CD4-positive, alpha-beta memory T cell (primary cell): ENCODE measurements at regions of chr6 and their contacts with region 1.

Region 1: DNA sequence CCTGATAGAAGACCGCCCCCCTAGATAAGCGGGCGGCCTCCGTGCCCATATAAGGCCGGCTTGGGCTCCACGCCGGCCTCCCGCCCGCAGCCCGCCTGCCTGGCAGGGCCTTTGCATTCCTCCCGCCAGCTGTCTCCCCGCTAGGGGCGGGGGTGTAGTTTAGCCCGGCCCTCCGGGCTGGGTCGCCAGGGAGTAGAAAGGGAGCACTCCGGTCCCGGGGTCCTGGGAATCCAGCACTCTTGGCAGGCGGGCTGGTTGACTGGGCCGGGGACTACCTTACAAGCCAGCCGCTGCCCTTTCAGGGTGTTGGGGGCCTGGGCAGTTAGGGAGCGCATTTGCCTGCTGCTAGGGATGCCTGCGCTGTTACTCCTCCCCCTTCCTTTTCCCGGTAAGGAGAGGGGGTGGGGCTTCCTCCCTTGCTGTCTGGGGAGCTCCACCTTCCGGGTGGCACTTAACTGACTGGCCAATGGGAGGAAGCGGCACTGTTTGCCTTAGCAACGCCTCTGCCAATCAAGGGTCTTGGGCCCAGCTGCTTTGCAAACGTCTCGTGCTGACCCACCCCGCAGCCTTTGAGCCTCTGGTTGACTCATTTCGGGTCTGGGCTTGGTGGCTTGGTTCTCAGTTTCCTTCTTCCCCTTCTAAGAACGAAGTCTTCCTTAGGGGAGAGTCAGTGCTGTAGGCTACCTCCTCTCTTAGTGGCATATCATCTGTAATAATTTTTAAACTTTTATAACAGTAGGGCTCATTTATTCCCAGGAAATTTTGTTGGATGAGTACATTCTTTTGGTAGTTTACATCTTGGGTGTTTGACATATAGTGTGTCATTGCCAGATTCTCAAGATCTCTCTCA is 3.4 kb downstream of the SRF start:
- DNase-seq: peak; percentile 89 to 97 (median 91)
- H3K4me3 ChIP-seq: peak overlapping the region; percentile 22 to 49
- H3K4me3 Mint-ChIP-seq: peak overlapping the region; percentile 77 to 99 (median 93)
- H3K27ac ChIP-seq: peak overlapping the region; percentile 83
- H3K27ac Mint-ChIP-seq: peak overlapping the region; percentile 93 to 98 (median 97)
- H3K4me1 ChIP-seq: peaks cover 47% of the 10 kb centered on the region
- H3K4me1 Mint-ChIP-seq: peaks cover 29 to 56% (median 42%) of the 10 kb centered on the region in 4 donors
- H3K27me3 ChIP-seq: no peaks in the 10 kb centered on the region
- H3K27me3 Mint-ChIP-seq: no peaks in the 10 kb centered on the region

Region 2: DNA sequence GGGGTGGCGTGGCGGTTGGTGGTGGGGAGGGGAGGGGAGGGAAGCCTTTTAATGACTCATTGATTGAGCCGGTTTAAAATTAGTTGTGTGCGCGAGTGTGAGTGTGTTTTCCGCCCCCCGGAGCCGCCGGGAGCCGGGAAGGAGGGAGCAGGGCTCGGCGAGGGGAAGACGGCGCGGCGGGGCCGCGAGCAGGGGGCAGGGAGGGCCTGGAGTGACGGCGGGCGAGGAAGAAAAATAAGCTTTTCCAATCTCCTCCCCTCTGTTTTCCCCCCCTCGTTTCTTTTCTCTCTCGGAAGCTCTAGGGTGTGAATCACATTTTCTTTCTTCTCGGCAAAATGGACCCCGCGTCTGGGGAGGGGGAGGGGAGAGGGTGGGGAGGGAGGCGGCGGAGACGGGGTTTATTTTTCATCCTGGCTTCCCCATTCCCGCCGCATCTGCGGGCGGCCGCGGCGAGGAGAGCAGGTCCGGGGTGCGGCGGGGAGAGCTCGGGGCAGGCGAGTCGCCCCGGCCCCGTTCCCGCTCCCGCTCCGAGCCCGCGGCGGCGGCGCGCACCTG is 391.8 kb before region 1 on chr6:
- CTCF ChIA-PET with region 1: no interaction called
- POLR2A ChIA-PET with region 1: no interaction called
- intact Hi-C with region 1: loop called (anchors 5 kb)
- DNase-seq: peak; percentile 82 to 87 (median 82)
- H3K4me3 ChIP-seq: peak overlapping the region; percentile 80 to 88
- H3K4me3 Mint-ChIP-seq: peak overlapping the region; percentile 95 to 100 (median 99)
- H3K27ac ChIP-seq: peak overlapping the region; percentile 100
- H3K27ac Mint-ChIP-seq: peak overlapping the region in 6 of 7 donors; percentile 100
- H3K4me1 ChIP-seq: peaks cover 68% of the 10 kb centered on the region
- H3K4me1 Mint-ChIP-seq: peaks cover 20 to 46% (median 28%) of the 10 kb centered on the region in 4 donors
- H3K27me3 ChIP-seq: no peaks in the 10 kb centered on the region
- H3K27me3 Mint-ChIP-seq: peaks cover 0 to 1% of the 10 kb centered on the region in 2 donors

Region 3: DNA sequence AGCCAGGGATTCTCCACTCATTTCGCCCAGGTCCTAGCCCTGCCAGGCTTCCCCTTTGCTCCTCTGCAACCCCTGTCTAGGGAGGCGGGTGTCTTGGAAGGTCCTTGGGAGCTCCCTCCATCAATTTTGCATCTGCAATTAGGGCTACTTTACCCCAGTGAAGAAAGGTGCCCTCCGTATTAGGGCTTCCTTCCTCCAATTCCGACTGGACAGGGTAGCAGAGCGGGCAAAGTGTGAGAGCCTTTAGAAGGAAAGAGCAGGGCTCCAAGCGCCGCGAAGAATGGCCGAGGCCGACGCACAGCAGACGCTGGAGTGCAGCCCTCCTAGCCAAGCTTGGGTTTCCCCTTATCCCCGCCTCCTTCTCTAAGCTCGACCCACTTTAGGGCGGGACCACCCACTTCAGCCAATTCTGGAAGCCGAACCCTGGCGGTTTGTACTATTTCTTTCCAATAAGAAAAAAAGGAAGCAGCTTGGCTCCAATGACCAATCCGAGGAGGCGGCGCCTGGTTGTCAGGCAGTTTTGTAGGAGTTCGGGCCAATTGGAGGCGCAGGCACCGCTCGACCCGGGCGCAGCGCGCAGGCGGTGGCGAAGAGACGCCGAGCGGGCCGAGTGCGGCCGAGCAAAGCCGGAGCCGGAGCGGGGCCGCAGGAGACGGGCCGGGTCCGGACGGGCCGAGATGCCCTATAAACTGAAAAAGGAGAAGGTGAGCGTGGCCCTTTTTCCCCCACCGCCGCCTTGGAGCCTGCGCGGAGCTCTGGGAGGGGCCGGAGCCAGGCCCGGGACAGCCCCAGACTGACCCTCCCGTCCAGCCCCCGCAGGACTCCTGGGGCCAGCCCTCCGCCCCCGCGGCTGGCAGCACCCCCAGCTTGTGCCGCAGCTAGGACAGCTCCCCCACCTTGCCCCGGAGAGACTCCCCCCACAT is 190.2 kb before region 1 on chr6 and contains the start of gene PPP2R5D:
- CTCF ChIA-PET with region 1: no interaction called
- POLR2A ChIA-PET with region 1: interaction called, 6 read pairs
- intact Hi-C with region 1: loop called (anchors 2 kb)
- DNase-seq: peak; percentile 96 to 99 (median 98)
- H3K4me3 ChIP-seq: peak within 1 kb of the TSS; percentile 70 to 75
- H3K4me3 Mint-ChIP-seq: peak within 1 kb of the TSS; percentile 88 to 97 (median 94)
- H3K27ac ChIP-seq: peak within 1 kb of the TSS; percentile 87
- H3K27ac Mint-ChIP-seq: peak within 1 kb of the TSS; percentile 93 to 98 (median 96)
- H3K4me1 ChIP-seq: peaks cover 58% of the 10 kb centered on the region
- H3K4me1 Mint-ChIP-seq: peaks cover 45 to 73% (median 62%) of the 10 kb centered on the region in 4 donors
- H3K27me3 ChIP-seq: no peaks in the 10 kb centered on the region
- H3K27me3 Mint-ChIP-seq: no peaks in the 10 kb centered on the region
- total RNA-seq, gene PPP2R5D: 36.6 to 38.0 TPM

Region 4: DNA sequence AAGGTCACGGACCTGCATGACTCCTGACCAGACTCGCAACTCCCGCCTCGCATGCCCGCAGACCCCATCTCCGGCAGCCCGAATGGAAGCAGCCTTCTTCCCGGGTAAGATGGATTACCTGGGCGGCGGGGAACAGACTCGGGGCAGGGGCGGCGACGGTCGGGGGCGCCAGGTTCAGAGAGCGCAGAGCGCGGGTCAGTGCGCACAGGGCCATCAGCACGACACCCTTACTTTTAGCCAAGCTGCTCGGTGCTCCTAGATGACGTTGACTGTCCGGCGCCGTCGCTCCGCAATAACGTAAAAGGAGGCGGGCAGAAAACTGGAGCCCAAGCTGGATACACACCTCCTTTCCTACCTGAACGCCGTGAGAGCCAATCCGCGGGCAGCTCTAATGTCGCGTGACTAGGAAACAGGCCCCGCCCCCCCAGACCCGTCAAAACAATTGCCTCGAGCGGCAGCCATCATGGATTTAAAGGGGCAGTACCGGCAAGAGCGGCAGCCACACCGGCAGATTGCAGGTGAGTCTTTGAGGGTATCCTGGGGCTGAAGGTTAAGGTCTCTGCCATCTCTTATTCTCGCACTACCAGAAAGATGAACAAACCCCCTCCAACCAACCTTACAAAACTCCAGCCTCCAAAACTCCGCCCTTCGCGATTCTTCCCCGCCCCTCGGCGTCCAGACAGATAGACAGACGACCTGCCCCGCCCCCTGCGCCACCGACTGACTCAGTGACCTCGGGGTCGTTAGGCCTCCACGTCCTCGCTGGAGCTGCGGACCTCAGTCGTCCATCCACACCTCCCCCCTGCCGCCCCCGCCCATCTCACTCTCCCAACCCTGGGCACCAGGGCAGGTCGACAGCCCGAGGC is 115.1 kb before region 1 on chr6 and contains the starts of genes KLC4 and MRPL2:
- CTCF ChIA-PET with region 1: no interaction called
- POLR2A ChIA-PET with region 1: interaction called, 5 read pairs
- intact Hi-C with region 1: loop called (anchors 1 kb)
- DNase-seq: peak; percentile 95 to 99 (median 96)
- H3K4me3 ChIP-seq: peak within 1 kb of the TSS; percentile 84 to 87
- H3K4me3 Mint-ChIP-seq: peak within 1 kb of the TSS; percentile 94 to 99 (median 97)
- H3K27ac ChIP-seq: peak within 1 kb of the TSS; percentile 91
- H3K27ac Mint-ChIP-seq: peak within 1 kb of the TSS; percentile 97 to 100 (median 99)
- H3K4me1 ChIP-seq: peaks cover 24% of the 10 kb centered on the region
- H3K4me1 Mint-ChIP-seq: peaks cover 27 to 52% (median 35%) of the 10 kb centered on the region in 4 donors
- H3K27me3 ChIP-seq: no peaks in the 10 kb centered on the region
- H3K27me3 Mint-ChIP-seq: no peaks in the 10 kb centered on the region
- total RNA-seq, gene KLC4: 51.6 to 57.0 TPM
- total RNA-seq, gene MRPL2: 55.3 to 56.5 TPM

Region 5: DNA sequence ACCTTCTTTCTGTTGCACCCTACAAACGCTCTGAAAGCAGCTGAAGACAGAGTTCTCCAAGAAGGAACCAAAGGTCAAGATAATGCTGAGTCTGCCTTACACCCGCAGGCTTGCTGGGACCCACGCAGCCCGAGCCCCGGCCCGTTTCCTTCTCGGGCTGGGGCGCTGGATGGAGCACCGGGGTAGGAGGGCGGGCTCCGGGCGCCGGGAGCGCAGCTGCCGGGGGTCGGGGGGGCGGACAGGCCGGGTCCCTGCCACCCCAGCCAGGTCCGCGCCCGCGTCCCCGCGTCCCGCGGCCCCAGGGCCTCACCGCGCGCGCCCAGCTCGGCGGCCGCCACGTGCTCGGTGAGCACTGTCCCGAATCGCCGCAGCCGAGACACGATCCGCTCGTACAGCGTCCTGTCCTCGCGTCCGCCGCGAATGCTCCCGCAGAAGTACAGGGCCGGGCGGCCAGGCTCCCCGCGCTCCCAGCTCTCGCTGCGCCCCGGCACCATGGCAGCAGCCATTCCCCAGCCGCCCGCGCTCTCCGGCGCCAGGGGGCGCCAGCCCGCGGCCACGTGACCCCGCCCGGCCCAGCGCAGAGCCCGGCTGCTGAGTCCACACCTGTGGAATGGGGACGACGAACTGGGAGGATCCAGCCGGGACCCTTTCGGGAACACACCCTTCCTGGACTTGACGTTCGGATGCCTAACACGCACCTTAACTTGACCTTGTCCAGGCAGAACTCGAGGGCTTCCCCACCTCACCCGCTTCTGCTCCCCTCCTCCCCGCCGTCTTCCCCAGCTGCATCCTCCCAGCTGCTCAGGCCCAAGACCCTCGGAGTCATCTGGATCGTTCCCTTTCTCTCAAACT is 54.7 kb after region 1 on chr6 and contains the start of gene DNPH1:
- CTCF ChIA-PET with region 1: interaction called, 5 read pairs
- POLR2A ChIA-PET with region 1: interaction called, 39 read pairs
- intact Hi-C with region 1: loop called (anchors 1 kb)
- DNase-seq: peak; percentile 71 to 84 (median 79)
- H3K4me3 ChIP-seq: peak within 1 kb of the TSS; percentile 11 to 69
- H3K4me3 Mint-ChIP-seq: peak within 1 kb of the TSS; percentile 88 to 96 (median 92)
- H3K27ac ChIP-seq: peak within 1 kb of the TSS; percentile 63
- H3K27ac Mint-ChIP-seq: peak within 1 kb of the TSS; percentile 94 to 97 (median 95)
- H3K4me1 ChIP-seq: peaks cover 49% of the 10 kb centered on the region
- H3K4me1 Mint-ChIP-seq: peaks cover 26 to 48% (median 34%) of the 10 kb centered on the region in 4 donors
- H3K27me3 ChIP-seq: no peaks in the 10 kb centered on the region
- H3K27me3 Mint-ChIP-seq: peaks cover 3 to 4% of the 10 kb centered on the region in 2 donors
- total RNA-seq, gene DNPH1: 32.8 to 34.8 TPM

Region 6: GRCh38 chr6:43386492-43386891 is 212.0 kb after region 1 on chr6:
- CTCF ChIA-PET with region 1: no interaction called
- POLR2A ChIA-PET with region 1: no interaction called
- intact Hi-C with region 1: loop called (anchors 5 kb)
- DNase-seq: peak in 3 of 5 donors; percentile 29 to 60 (median 36)
- H3K4me3 ChIP-seq: no peak overlapping the region
- H3K4me3 Mint-ChIP-seq: peak overlapping the region in 2 of 8 donors; percentile 28 to 64
- H3K27ac ChIP-seq: no peak overlapping the region
- H3K27ac Mint-ChIP-seq: peak overlapping the region in 6 of 7 donors; percentile 43 to 92 (median 84)
- H3K4me1 ChIP-seq: peaks cover 67% of the 10 kb centered on the region
- H3K4me1 Mint-ChIP-seq: peaks cover 54 to 74% (median 63%) of the 10 kb centered on the region in 4 donors
- H3K27me3 ChIP-seq: no peaks in the 10 kb centered on the region
- H3K27me3 Mint-ChIP-seq: peaks cover 0 to 8% of the 10 kb centered on the region in 2 donors

Region 7: GRCh38 chr6:43575772-43576551 is 401.5 kb after region 1 on chr6 and contains the starts of genes POLH and XPO5:
- CTCF ChIA-PET with region 1: no interaction called
- POLR2A ChIA-PET with region 1: no interaction called
- intact Hi-C with region 1: loop called (anchors 5 kb)
- DNase-seq: peak; percentile 88 to 90 (median 90)
- H3K4me3 ChIP-seq: peak within 1 kb of the TSS; percentile 71 to 82
- H3K4me3 Mint-ChIP-seq: peak within 1 kb of the TSS; percentile 93 to 99 (median 98)
- H3K27ac ChIP-seq: peak within 1 kb of the TSS; percentile 79
- H3K27ac Mint-ChIP-seq: peak within 1 kb of the TSS; percentile 85 to 96 (median 95)
- H3K4me1 ChIP-seq: peaks cover 33% of the 10 kb centered on the region
- H3K4me1 Mint-ChIP-seq: peaks cover 23 to 48% (median 36%) of the 10 kb centered on the region in 4 donors
- H3K27me3 ChIP-seq: no peaks in the 10 kb centered on the region
- H3K27me3 Mint-ChIP-seq: no peaks in the 10 kb centered on the region
- total RNA-seq, gene POLH: 27.1 to 31.9 TPM
- total RNA-seq, gene XPO5: 42.2 to 43.4 TPM